Left cardiac atrium (tissue), 4 donors: ENCODE measurements at regions of chr5 and their contacts with region 1.

Region 1: GRCh38 chr5:41527201-41527811 is 16.9 kb upstream of the PLCXD3 start:
- DNase-seq: peak; percentile 71
- ATAC-seq: peak; percentile 93 to 99

Region 2: GRCh38 chr5:41408676-41409443 is 118.4 kb before region 1 on chr5:
- intact Hi-C with region 1: no loop called
- DNase-seq: peak; percentile 37
- ATAC-seq: peak in 1 of 2 donors; percentile 44

Region 3: DNA sequence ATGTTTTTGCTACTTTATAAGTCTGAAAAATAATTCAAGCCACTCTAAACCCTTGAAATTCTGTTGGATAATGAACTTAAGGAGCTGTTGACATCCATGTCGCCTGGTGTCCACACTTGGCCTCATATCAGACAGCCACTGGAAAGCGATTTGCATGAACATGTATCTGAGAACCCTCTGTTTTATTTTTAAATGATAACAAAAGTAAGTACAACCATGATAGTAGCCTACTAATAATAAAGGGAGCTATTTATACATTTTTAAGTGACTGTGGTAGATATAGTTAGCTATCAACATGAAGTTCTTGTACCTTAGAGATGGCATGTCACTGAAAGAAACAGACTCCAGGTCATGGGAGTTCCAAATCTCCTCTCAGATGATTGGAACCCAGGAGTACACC is 70.2 kb before region 1 on chr5:
- intact Hi-C with region 1: loop called in 1 of 2 experiments (anchors 2 kb)
- DNase-seq: peak; percentile 34
- ATAC-seq: peak; percentile 93 to 94